Common myeloid progenitor, CD34-positive (primary cell): ENCODE measurements at regions of chr17 and their contacts with region 1.

Region 1: GRCh38 chr17:35981908-35982330 is 622 bp upstream of the CCL16 start:
- DNase-seq: peak in 2 of 3 donors; percentile 20 to 27
- H3K4me3 ChIP-seq: no peak overlapping the region
- H3K27ac ChIP-seq: no peak overlapping the region
- H3K4me1 ChIP-seq: no peaks in the 10 kb centered on the region
- H3K27me3 ChIP-seq: no peaks in the 10 kb centered on the region

Region 2: DNA sequence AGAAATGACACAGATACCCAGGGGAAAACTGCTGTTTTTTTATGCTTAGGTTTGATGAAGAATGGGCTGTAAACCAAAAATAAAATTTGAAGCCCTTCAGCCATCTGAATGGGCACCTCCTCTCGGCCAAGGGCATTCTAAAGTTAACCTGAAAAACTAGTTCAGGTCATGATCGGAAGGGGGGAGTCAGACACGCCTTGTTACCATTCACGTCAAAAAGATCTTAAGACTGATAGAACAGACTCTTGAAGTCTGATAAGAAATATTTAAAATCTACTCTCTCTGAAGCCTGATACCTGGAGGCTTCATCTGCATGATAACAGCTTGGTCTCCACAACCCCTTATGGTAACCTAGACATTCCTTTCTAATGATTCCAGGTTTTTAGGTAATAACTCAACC is 77.6 kb before region 1 on chr17:
- CTCF ChIA-PET with region 1: no interaction called
- POLR2A ChIA-PET with region 1: no interaction called
- DNase-seq: no peak
- H3K4me3 ChIP-seq: no peak overlapping the region
- H3K27ac ChIP-seq: no peak overlapping the region
- H3K4me1 ChIP-seq: peaks cover 0 to 10% (median 1%) of the 10 kb centered on the region in 4 experiments
- H3K27me3 ChIP-seq: no peaks in the 10 kb centered on the region

Region 3: GRCh38 chr17:35915153-35915969 is 66.6 kb before region 1 on chr17:
- CTCF ChIA-PET with region 1: no interaction called
- POLR2A ChIA-PET with region 1: no interaction called
- DNase-seq: peak in 2 of 3 donors; percentile 33 to 42
- H3K4me3 ChIP-seq: no peak overlapping the region
- H3K27ac ChIP-seq: no peak overlapping the region
- H3K4me1 ChIP-seq: peaks cover 0 to 8% (median 7%) of the 10 kb centered on the region in 4 experiments
- H3K27me3 ChIP-seq: peaks cover 0 to 3% (median 0%) of the 10 kb centered on the region in 5 experiments

Region 4: DNA sequence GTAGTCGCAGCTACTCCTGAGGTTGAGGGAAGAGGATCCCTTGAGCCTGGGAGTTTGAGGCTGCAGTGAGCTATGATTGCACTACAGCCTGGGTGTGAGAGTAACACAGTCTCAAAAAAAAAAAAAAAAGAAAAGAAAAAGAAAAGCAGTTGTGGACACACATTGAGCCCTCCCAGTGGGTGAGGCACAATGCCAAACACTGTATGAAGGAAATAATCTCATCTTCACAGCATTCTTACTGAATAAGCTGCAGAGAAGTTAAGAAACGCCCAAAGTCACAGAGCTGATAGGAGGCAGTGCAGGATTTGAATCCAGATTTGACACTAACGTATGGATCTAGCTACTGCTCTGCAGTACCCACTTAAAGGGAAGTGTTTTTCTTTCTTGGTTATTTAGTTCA is 32.5 kb before region 1 on chr17:
- CTCF ChIA-PET with region 1: no interaction called
- POLR2A ChIA-PET with region 1: no interaction called
- DNase-seq: peak in 1 of 3 donors; percentile 21
- H3K4me3 ChIP-seq: no peak overlapping the region
- H3K27ac ChIP-seq: no peak overlapping the region
- H3K4me1 ChIP-seq: peaks cover 0 to 6% (median 4%) of the 10 kb centered on the region in 4 experiments
- H3K27me3 ChIP-seq: peaks cover 0 to 3% (median 2%) of the 10 kb centered on the region in 5 experiments

Region 5: DNA sequence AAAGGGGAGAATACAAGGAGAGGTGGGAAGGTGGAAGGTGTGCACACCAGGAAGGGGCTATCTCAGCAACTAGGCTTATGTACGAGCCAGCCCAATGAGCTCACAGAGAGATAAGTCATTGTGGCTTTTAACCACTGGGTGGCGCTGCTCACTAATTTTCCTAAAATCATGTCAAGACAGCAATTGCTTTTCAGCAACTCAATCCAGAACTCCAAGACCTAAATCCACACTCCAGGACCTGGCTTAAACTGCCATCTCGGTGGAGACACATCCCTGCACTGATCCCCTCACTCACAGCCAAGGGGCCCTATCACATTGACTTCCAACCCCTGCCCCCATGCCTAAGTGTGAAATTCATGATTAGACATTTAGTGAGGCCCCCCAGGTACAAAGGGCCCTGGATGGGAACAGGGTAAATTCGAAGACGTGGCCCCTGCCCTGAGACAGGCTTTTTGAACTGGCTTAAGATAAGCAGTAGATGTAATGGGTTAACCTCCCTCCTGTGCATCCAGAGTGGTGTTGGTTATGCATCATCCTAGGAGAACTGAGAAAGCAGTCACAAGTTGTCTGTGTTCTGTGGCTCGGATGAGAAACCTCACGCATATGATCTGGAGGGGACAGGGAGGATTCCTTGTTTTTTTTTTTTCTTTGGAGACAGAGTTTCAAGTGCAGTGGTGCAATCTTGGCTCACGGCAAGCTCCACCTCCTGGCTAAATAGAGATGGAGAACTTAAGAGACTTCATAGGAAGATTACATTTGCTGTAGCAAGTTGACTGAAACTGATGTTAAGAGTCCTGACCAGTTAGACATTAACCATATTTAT is 12.2 kb before region 1 on chr17:
- CTCF ChIA-PET with region 1: interaction called, 10 read pairs
- POLR2A ChIA-PET with region 1: no interaction called
- DNase-seq: peak; percentile 78 to 87 (median 79)
- H3K4me3 ChIP-seq: no peak overlapping the region
- H3K27ac ChIP-seq: no peak overlapping the region
- H3K4me1 ChIP-seq: peaks cover 0 to 6% (median 3%) of the 10 kb centered on the region in 4 experiments
- H3K27me3 ChIP-seq: no peaks in the 10 kb centered on the region